ENCODE measurements at regions of chr12 and their contacts with region 1.

Region 1: GRCh38 chr12:24991209-24992049 is 42.5 kb upstream of the BCAT1 start:
- DNase-seq: peak; percentile 72

Region 2: GRCh38 chr12:24561882-24562760 is 429.3 kb before region 1 on chr12:
- in situ Hi-C with region 1: no loop called
- DNase-seq: peak; percentile 23

Region 3: GRCh38 chr12:24695657-24696329 is 295.6 kb before region 1 on chr12:
- in situ Hi-C with region 1: no loop called
- DNase-seq: no peak

Region 4: DNA sequence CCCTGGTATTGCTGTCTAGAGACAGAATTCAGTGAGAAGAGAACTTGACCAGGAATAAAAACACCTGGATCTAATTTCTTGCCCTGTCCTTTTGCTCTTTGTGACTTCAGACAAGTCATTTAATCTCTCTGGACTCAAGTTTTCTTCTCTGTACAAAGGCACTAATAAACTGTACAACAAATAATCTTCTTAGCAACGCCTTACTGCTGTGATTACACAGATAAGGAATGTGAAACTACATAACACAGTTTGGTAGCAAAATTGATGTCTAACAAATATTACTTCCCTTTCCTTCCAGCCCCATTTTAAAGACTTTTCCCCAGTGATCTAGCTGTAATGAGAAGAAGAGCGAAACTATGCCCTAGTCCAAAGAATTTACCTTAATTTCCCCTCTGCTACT is 111.8 kb before region 1 on chr12:
- in situ Hi-C with region 1: no loop called
- DNase-seq: no peak

Region 5: DNA sequence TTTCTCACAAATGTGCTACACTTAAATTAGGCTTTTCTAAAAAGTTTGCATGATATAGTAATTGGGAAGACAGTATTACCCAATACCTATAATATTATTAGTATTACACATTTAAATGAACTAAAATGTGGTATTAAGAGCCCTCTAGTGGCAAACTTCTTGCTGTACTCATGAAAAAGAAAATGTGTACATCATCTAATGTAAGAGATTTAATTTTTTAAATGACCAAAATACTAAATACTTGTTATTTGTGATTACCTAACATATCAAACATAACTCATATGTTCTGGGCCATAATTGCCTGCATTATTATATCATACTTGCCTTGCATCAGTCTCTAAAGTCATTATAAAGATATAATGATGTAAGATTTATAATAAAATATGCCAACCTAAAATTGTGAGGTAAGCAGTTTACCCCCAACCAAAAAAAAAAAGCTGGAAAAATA is 139.3 kb after region 1 on chr12:
- in situ Hi-C with region 1: loop called (anchors 25 kb)
- DNase-seq: peak; percentile 37

Region 6: GRCh38 chr12:25424211-25424731 is 432.8 kb after region 1 on chr12:
- in situ Hi-C with region 1: loop called (anchors 25 kb)
- DNase-seq: no peak

Region 7: DNA sequence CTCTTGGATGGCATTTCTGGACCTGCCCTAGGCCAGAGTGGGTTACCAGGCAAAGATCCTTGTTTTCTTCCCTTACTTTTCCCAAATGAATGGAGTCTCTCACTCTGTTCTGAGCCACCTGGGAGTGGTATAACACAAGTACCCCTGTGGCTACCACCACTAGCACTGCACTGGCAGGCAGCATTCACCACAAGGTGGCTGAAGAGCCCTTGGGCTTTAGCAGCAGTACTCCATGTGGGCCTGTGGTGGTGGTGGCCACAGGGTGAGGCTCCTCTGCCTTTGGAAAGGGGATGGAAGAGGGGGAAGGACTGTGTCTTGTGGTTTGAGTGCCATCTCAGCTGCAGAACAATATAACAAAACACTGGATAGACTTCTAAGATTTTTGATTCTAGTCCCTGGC is 599.7 kb after region 1 on chr12:
- in situ Hi-C with region 1: no loop called
- DNase-seq: no peak